Naive thymus-derived CD4-positive, alpha-beta T cell (primary cell): ENCODE measurements at regions of chr17 and their contacts with region 1.

Region 1: GRCh38 chr17:57243171-57243948 is 13.0 kb upstream of the MSI2 start:
- DNase-seq: peak; percentile 52 to 78 (median 68)
- ATAC-seq: peak; percentile 99
- H3K4me3 ChIP-seq: no peak overlapping the region
- H3K4me3 Mint-ChIP-seq: no peak overlapping the region
- H3K27ac ChIP-seq: no peak overlapping the region
- H3K27ac Mint-ChIP-seq: peak overlapping the region in 1 of 9 donors; percentile 36
- H3K4me1 ChIP-seq: no peaks in the 10 kb centered on the region
- H3K4me1 Mint-ChIP-seq: peaks cover 0 to 13% (median 0%) of the 10 kb centered on the region in 7 donors
- H3K27me3 ChIP-seq: no peaks in the 10 kb centered on the region
- H3K27me3 Mint-ChIP-seq: peaks cover 2 to 33% (median 5%) of the 10 kb centered on the region in 5 donors

Region 2: GRCh38 chr17:57261084-57261461 is 17.7 kb after region 1 on chr17:
- CTCF ChIA-PET with region 1: interaction called, 19 read pairs
- POLR2A ChIA-PET with region 1: interaction called, 7 read pairs
- intact Hi-C with region 1: loop called in 1 of 2 experiments (anchors 1 kb)
- DNase-seq: peak in 1 of 9 donors; percentile 21
- ATAC-seq: no peak
- H3K4me3 ChIP-seq: no peak overlapping the region
- H3K4me3 Mint-ChIP-seq: peak overlapping the region in 8 of 10 donors; percentile 7 to 95 (median 46)
- H3K27ac ChIP-seq: no peak overlapping the region
- H3K27ac Mint-ChIP-seq: peak overlapping the region in 2 of 9 donors; percentile 48 to 86
- H3K4me1 ChIP-seq: peaks cover 13 to 35% of the 10 kb centered on the region in 2 donors
- H3K4me1 Mint-ChIP-seq: peaks cover 37 to 83% (median 74%) of the 10 kb centered on the region in 7 donors
- H3K27me3 ChIP-seq: no peaks in the 10 kb centered on the region
- H3K27me3 Mint-ChIP-seq: no peaks in the 10 kb centered on the region

Region 3: GRCh38 chr17:57408071-57408811 is 164.9 kb after region 1 on chr17:
- CTCF ChIA-PET with region 1: interaction called, 3 read pairs
- POLR2A ChIA-PET with region 1: no interaction called
- intact Hi-C with region 1: loop called (anchors 1 kb)
- DNase-seq: peak in 6 of 9 donors; percentile 14 to 31 (median 27)
- ATAC-seq: peak; percentile 72
- H3K4me3 ChIP-seq: no peak overlapping the region
- H3K4me3 Mint-ChIP-seq: peak overlapping the region; percentile 16 to 72 (median 54)
- H3K27ac ChIP-seq: peak overlapping the region; percentile 37
- H3K27ac Mint-ChIP-seq: peak overlapping the region; percentile 4 to 75 (median 50)
- H3K4me1 ChIP-seq: peaks cover 0 to 17% of the 10 kb centered on the region in 2 donors
- H3K4me1 Mint-ChIP-seq: peaks cover 38 to 78% (median 53%) of the 10 kb centered on the region in 7 donors
- H3K27me3 ChIP-seq: no peaks in the 10 kb centered on the region
- H3K27me3 Mint-ChIP-seq: no peaks in the 10 kb centered on the region

Region 4: DNA sequence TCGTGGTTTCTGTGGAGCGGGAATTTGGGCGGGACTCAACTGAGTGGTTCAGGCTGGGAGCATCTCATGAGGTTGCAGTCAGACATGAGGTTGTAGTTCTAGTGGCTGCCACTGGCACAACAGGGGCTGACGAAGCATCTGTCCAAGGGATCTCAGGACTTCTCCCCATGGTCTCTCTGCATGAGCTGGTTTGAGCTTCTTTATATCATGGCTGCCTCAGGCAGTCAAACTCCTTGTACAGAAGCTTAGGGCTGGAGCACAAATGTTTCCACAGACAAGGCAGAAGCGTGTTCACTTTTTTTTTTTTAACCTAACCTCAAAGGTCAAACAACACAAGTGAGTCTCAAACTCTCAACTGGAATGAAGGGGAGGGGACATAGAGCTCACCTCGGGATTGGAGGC is 256.3 kb after region 1 on chr17:
- CTCF ChIA-PET with region 1: no interaction called
- POLR2A ChIA-PET with region 1: no interaction called
- intact Hi-C with region 1: no loop called
- DNase-seq: no peak
- ATAC-seq: no peak
- H3K4me3 ChIP-seq: no peak overlapping the region
- H3K4me3 Mint-ChIP-seq: no peak overlapping the region
- H3K27ac ChIP-seq: no peak overlapping the region
- H3K27ac Mint-ChIP-seq: peak overlapping the region in 4 of 9 donors; percentile 19 to 81 (median 42)
- H3K4me1 ChIP-seq: peaks cover 0 to 5% of the 10 kb centered on the region in 2 donors
- H3K4me1 Mint-ChIP-seq: peaks cover 22 to 76% (median 59%) of the 10 kb centered on the region in 7 donors
- H3K27me3 ChIP-seq: no peaks in the 10 kb centered on the region
- H3K27me3 Mint-ChIP-seq: no peaks in the 10 kb centered on the region

Region 5: DNA sequence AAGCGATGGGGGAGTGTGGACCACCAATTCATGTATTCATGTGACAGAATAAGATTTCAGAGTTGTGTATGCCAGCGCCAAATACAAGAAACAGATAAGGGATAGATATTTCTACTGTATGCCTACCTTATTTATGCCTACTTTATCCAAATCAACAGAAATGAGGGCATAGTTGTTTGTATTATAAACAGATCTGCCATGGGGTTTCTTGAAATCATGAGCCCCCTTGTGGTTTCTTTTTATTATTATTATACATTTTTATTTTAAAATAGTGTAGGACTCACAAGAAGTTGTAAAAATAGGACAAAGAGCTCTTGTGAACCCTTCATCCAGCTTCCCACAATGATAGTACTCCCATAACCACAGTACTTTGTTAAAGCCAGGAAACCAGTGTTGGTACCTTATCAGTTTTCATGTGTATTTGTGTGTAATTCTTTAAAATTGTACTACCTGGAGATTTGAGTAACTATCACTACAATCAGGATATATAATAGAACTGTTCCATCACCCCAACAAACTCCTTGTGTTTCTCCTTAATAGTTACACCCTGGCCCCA is 272.4 kb after region 1 on chr17:
- CTCF ChIA-PET with region 1: interaction called, 5 read pairs
- POLR2A ChIA-PET with region 1: no interaction called
- intact Hi-C with region 1: loop called in 1 of 2 experiments (anchors 1 kb)
- DNase-seq: no peak
- ATAC-seq: no peak
- H3K4me3 ChIP-seq: no peak overlapping the region
- H3K4me3 Mint-ChIP-seq: no peak overlapping the region
- H3K27ac ChIP-seq: no peak overlapping the region
- H3K27ac Mint-ChIP-seq: no peak overlapping the region
- H3K4me1 ChIP-seq: no peaks in the 10 kb centered on the region
- H3K4me1 Mint-ChIP-seq: peaks cover 4 to 17% (median 8%) of the 10 kb centered on the region in 7 donors
- H3K27me3 ChIP-seq: no peaks in the 10 kb centered on the region
- H3K27me3 Mint-ChIP-seq: no peaks in the 10 kb centered on the region

Region 6: GRCh38 chr17:57671667-57672632 is 428.6 kb after region 1 on chr17:
- CTCF ChIA-PET with region 1: interaction called, 14 read pairs
- POLR2A ChIA-PET with region 1: interaction called, 5 read pairs
- intact Hi-C with region 1: loop called (anchors 1 kb)
- DNase-seq: peak; percentile 47 to 73 (median 61)
- ATAC-seq: peak; percentile 92
- H3K4me3 ChIP-seq: peak overlapping the region; percentile 31
- H3K4me3 Mint-ChIP-seq: peak overlapping the region in 5 of 10 donors; percentile 10 to 61 (median 29)
- H3K27ac ChIP-seq: no peak overlapping the region
- H3K27ac Mint-ChIP-seq: peak overlapping the region; percentile 10 to 84 (median 74)
- H3K4me1 ChIP-seq: peaks cover 6 to 29% of the 10 kb centered on the region in 2 donors
- H3K4me1 Mint-ChIP-seq: peaks cover 0 to 26% (median 14%) of the 10 kb centered on the region in 7 donors
- H3K27me3 ChIP-seq: no peaks in the 10 kb centered on the region
- H3K27me3 Mint-ChIP-seq: no peaks in the 10 kb centered on the region

Region 7: GRCh38 chr17:57833179-57833939 is 590.0 kb after region 1 on chr17:
- CTCF ChIA-PET with region 1: no interaction called
- POLR2A ChIA-PET with region 1: no interaction called
- intact Hi-C with region 1: loop called (anchors 1 to 2 kb)
- DNase-seq: peak; percentile 29 to 68 (median 58)
- ATAC-seq: peak; percentile 86
- H3K4me3 ChIP-seq: peak overlapping the region; percentile 29
- H3K4me3 Mint-ChIP-seq: no peak overlapping the region
- H3K27ac ChIP-seq: peak overlapping the region; percentile 8
- H3K27ac Mint-ChIP-seq: no peak overlapping the region
- H3K4me1 ChIP-seq: no peaks in the 10 kb centered on the region
- H3K4me1 Mint-ChIP-seq: peaks cover 0 to 13% (median 4%) of the 10 kb centered on the region in 7 donors
- H3K27me3 ChIP-seq: no peaks in the 10 kb centered on the region
- H3K27me3 Mint-ChIP-seq: no peaks in the 10 kb centered on the region